HepG2 (cell line): ENCODE measurements at regions of chr4 and their contacts with region 1.

Region 1: GRCh38 chr4:175947117-175947722 is 118.4 kb upstream of the WDR17 start:
- DNase-seq: peak; percentile 6
- ATAC-seq: no peak
- H3K4me3 ChIP-seq: no peak overlapping the region
- H3K27ac ChIP-seq: no peak overlapping the region
- H3K4me1 ChIP-seq: no peaks in the 10 kb centered on the region
- H3K27me3 ChIP-seq: no peaks in the 10 kb centered on the region
- CTCF ChIP-seq: peak; percentile 23; the same call in 1 of the 2 replicates
- EP300 ChIP-seq: no peak
- POLR2A ChIP-seq: no peak
- RAD21 ChIP-seq: no peak

Region 2: DNA sequence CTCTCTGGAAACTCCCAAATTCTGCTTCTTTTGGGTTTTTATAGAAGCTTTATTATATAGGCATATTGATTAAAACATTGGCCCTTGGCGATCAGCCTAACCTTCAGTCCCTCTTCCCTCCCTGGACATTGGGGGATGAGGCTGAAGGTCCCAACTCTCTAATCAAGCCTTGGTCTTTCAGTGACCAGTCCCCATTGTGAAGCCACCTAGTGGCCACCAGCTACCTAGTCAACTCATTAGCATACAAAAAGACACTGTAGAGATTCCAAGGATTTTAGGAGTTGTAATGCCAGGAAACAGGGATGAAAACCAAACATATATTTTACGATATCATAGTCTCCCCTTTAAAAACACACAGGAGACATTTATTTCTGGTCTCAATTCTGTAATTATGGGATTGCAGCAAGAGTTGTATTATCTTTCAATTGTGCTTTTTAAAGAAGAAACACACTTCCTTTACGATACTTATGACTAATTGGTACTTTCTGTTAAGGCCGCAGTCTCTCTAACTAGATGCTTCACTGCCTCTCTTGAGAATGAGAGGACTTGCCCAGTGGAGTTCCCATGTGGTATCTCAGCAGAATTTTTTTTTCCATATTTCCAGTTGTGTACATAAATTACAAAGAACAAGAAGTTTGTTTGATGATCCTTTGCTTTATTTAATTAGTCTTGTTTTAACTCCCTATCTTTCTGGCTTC is 176.6 kb after region 1 on chr4:
- CTCF ChIA-PET with region 1: no interaction called
- POLR2A ChIA-PET with region 1: no interaction called
- in situ Hi-C with region 1: no loop called
- intact Hi-C with region 1: loop called (anchors 1 kb)
- DNase-seq: peak; percentile 24
- ATAC-seq: peak; percentile 94
- H3K4me3 ChIP-seq: no peak overlapping the region
- H3K27ac ChIP-seq: no peak overlapping the region
- H3K4me1 ChIP-seq: no peaks in the 10 kb centered on the region
- H3K27me3 ChIP-seq: no peaks in the 10 kb centered on the region
- CTCF ChIP-seq: peak; percentile 51
- EP300 ChIP-seq: no peak
- POLR2A ChIP-seq: no peak
- RAD21 ChIP-seq: no peak

Region 3: DNA sequence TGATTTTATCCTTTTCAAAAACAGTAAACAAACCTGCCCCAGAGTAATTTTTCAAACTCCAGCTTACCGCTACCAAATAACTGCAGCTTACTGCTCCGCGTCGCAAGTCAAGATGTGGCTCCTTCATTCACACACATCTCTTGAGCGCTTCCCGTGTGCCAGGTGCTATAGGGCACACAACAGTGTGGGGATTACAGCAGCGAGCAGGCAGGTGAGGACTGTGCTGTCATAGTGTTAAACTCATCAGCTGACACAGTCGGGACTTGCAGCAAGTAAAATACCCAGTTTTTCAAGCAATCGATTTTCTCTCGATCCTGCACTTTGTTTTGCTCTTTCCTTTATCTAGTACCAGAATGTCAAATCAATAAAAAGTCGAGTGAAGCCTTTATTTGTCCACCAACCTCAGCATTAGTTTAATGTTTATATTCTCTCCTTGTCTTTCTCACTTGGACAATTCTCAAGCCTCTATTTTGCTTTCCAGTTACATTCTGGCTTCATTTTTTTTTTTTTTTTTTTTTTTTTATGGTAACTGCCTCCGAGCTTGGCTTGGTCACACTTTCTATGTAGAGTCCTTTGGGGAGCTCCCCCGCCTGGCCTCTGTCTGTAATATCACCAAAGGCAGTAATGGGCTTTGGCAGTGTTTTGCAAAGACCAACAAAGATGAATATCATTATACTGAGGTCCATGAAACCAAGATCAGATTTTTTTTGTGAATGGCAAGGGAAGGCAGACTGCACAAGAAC is 330.1 kb after region 1 on chr4:
- CTCF ChIA-PET with region 1: no interaction called
- POLR2A ChIA-PET with region 1: no interaction called
- in situ Hi-C with region 1: no loop called
- intact Hi-C with region 1: loop called (anchors 5 kb)
- DNase-seq: peak; percentile 39
- ATAC-seq: peak; percentile 100
- H3K4me3 ChIP-seq: peak overlapping the region in 2 of 3 experiments; percentile 18 to 34; a peak in 2 of 6 replicates
- H3K27ac ChIP-seq: no peak overlapping the region
- H3K4me1 ChIP-seq: peaks cover 8% of the 10 kb centered on the region
- H3K27me3 ChIP-seq: peaks cover 0 to 4% of the 10 kb centered on the region in 2 experiments; a peak in 1 of 5 replicates
- CTCF ChIP-seq: peak; percentile 52
- EP300 ChIP-seq: no peak
- POLR2A ChIP-seq: no peak
- RAD21 ChIP-seq: no peak